CD8-positive, alpha-beta T cell (primary cell): ENCODE measurements at regions of chr2 and their contacts with region 1.

Region 1: GRCh38 chr2:114405247-114406116 is 37.0 kb upstream of the DPP10 start:
- DNase-seq: no peak
- ATAC-seq: no peak
- H3K4me3 ChIP-seq: no peak overlapping the region
- H3K4me3 Mint-ChIP-seq: no peak overlapping the region
- H3K27ac ChIP-seq: no peak overlapping the region
- H3K27ac Mint-ChIP-seq: no peak overlapping the region
- H3K4me1 ChIP-seq: no peaks in the 10 kb centered on the region
- H3K4me1 Mint-ChIP-seq: no peaks in the 10 kb centered on the region
- H3K27me3 ChIP-seq: no peaks in the 10 kb centered on the region
- H3K27me3 Mint-ChIP-seq: no peaks in the 10 kb centered on the region
- CTCF ChIP-seq: no peak

Region 2: DNA sequence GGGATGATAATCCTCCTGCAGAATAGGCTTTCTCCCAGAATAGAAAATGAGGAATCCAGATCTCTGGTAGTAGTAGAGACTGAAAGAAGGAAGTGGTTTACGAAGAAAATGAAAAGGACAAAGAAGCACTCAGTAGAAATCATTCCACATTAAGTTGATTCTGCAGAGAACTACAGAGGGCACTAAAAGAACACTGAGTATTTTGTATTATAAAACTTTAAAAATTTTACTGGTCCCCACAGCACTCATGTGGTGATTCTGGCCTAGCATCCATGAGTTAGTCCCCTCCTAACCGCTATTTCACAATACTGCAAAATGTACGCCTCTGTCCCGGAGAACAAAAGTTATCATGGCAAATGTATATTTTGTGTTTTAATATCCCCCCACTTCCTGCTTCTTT is 606.1 kb before region 1 on chr2:
- CTCF ChIA-PET with region 1: no interaction called
- POLR2A ChIA-PET with region 1: no interaction called
- intact Hi-C with region 1: loop called in 1 of 2 experiments (anchors 5 kb)
- DNase-seq: no peak
- ATAC-seq: no peak
- H3K4me3 ChIP-seq: no peak overlapping the region
- H3K4me3 Mint-ChIP-seq: no peak overlapping the region
- H3K27ac ChIP-seq: no peak overlapping the region
- H3K27ac Mint-ChIP-seq: no peak overlapping the region
- H3K4me1 ChIP-seq: no peaks in the 10 kb centered on the region
- H3K4me1 Mint-ChIP-seq: peaks cover 2% of the 10 kb centered on the region
- H3K27me3 ChIP-seq: no peaks in the 10 kb centered on the region
- H3K27me3 Mint-ChIP-seq: peaks cover 2% of the 10 kb centered on the region
- CTCF ChIP-seq: no peak

Region 3: GRCh38 chr2:114389021-114389420 is 16.5 kb before region 1 on chr2:
- CTCF ChIA-PET with region 1: no interaction called
- POLR2A ChIA-PET with region 1: no interaction called
- intact Hi-C with region 1: loop called in 1 of 2 experiments (anchors 1 kb)
- DNase-seq: no peak
- ATAC-seq: no peak
- H3K4me3 ChIP-seq: no peak overlapping the region
- H3K4me3 Mint-ChIP-seq: no peak overlapping the region
- H3K27ac ChIP-seq: no peak overlapping the region
- H3K27ac Mint-ChIP-seq: no peak overlapping the region
- H3K4me1 ChIP-seq: no peaks in the 10 kb centered on the region
- H3K4me1 Mint-ChIP-seq: no peaks in the 10 kb centered on the region
- H3K27me3 ChIP-seq: no peaks in the 10 kb centered on the region
- H3K27me3 Mint-ChIP-seq: peaks cover 5% of the 10 kb centered on the region
- CTCF ChIP-seq: no peak

Region 4: DNA sequence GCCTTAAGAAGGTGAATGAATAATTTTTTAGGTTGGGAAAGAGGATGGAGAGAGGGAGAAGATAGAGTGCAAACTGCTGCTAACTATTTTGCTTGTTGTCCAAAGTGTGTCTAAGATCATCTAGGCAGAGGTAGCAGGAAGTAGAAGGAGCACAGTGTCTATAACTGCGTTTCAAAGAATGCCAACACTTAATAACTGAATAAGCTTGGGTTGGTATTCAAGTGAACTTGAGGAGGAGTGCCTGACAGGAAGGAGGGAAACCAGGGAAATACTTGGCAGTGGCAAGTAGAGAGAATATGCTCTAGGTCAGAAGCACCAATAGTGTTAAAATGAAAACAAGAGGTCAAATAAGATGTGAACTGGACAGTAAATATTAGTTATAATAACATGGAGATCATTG is 192.8 kb after region 1 on chr2:
- CTCF ChIA-PET with region 1: no interaction called
- POLR2A ChIA-PET with region 1: no interaction called
- intact Hi-C with region 1: no loop called
- DNase-seq: no peak
- ATAC-seq: no peak
- H3K4me3 ChIP-seq: no peak overlapping the region
- H3K4me3 Mint-ChIP-seq: no peak overlapping the region
- H3K27ac ChIP-seq: no peak overlapping the region
- H3K27ac Mint-ChIP-seq: no peak overlapping the region
- H3K4me1 ChIP-seq: no peaks in the 10 kb centered on the region
- H3K4me1 Mint-ChIP-seq: no peaks in the 10 kb centered on the region
- H3K27me3 ChIP-seq: no peaks in the 10 kb centered on the region
- H3K27me3 Mint-ChIP-seq: no peaks in the 10 kb centered on the region
- CTCF ChIP-seq: no peak

Region 5: DNA sequence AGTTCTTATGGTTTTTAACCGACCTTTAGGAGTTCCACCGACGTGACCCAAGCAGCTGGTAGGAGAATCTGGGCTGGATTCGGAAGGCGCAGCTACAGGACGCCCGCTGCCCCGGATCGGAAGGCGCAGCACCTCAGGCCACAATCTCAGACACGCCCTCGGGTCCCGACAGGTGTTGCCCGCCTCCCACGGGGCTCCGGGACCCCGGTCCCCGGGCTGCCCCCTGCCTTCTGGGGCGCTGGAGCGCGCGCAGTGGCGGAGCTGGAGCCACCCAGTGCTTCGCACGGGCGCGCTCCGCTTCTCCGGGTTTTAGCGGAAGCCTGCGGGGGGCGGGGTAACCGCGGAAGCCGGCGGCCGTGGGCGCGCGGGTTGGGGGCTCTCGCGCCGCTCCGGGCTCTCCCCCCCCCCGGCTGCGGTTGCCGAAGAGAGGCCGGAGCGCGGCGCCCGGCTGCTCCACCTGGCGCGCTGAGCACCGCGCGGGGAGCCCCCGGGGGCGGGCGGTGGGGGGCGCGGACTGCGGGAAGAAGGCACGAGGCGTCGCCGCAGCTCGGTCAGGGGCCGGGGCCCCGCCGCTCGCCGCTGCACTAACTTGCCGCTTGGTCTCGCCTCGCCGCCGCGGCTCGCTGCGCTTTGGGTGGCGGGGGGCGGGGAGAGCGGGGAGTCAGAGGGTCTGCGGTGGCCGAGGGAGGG is 755.7 kb after region 1 on chr2:
- CTCF ChIA-PET with region 1: no interaction called
- POLR2A ChIA-PET with region 1: no interaction called
- intact Hi-C with region 1: no loop called
- DNase-seq: no peak
- ATAC-seq: no peak
- H3K4me3 ChIP-seq: no peak overlapping the region
- H3K4me3 Mint-ChIP-seq: peak overlapping the region; percentile 55
- H3K27ac ChIP-seq: no peak overlapping the region
- H3K27ac Mint-ChIP-seq: no peak overlapping the region
- H3K4me1 ChIP-seq: no peaks in the 10 kb centered on the region
- H3K4me1 Mint-ChIP-seq: peaks cover 4% of the 10 kb centered on the region
- H3K27me3 ChIP-seq: peaks cover 0 to 9% of the 10 kb centered on the region in 2 experiments
- H3K27me3 Mint-ChIP-seq: peaks cover 31% of the 10 kb centered on the region
- CTCF ChIP-seq: no peak